K562 (cell line): ENCODE measurements at regions of chr11 and their contacts with region 1.

Region 1: DNA sequence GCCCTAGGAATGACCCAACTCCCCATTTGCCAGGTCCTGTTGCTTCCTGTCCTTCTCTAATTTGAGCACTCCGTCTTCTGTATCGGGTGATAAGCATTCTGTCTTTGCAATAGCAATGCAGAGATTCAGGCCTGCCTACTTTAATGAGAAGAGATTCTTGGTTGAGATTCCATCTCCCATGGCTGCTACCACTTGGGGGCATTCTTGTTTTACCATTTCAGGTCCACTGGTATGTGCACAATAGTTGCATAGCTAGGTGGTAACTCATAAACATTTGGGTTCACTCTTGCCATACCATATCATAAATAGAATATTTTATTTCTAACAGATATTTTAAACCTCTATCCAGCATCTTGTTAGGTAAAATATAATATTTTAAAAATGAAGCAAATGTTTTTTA is 34.4 kb upstream of the CALCB start:
- DNase-seq: no peak
- ATAC-seq: no peak
- H3K4me3 ChIP-seq: no peak overlapping the region
- H3K27ac ChIP-seq: no peak overlapping the region
- H3K4me1 ChIP-seq: peaks cover 0 to 7% of the 10 kb centered on the region in 2 experiments; a peak in 2 of 5 replicates
- H3K27me3 ChIP-seq: no peaks in the 10 kb centered on the region; a peak in 2 of 5 replicates
- CTCF ChIP-seq: peak in 1 of 3 experiments; percentile 36; a peak in 2 of 6 replicates
- EP300 ChIP-seq: no peak
- POLR2A ChIP-seq: no peak
- RAD21 ChIP-seq: peak in 1 of 2 experiments; percentile 31; a peak in 2 of 4 replicates

Region 2: GRCh38 chr11:14320020-14320419 is 718.9 kb before region 1 on chr11:
- CTCF ChIA-PET with region 1: no interaction called
- POLR2A ChIA-PET with region 1: no interaction called
- in situ Hi-C with region 1: no loop called
- intact Hi-C with region 1: no loop called
- DNase-seq: no peak
- ATAC-seq: no peak
- H3K4me3 ChIP-seq: no peak overlapping the region
- H3K27ac ChIP-seq: no peak overlapping the region
- H3K4me1 ChIP-seq: no peaks in the 10 kb centered on the region
- H3K27me3 ChIP-seq: no peaks in the 10 kb centered on the region
- CTCF ChIP-seq: no peak
- EP300 ChIP-seq: no peak
- POLR2A ChIP-seq: no peak
- RAD21 ChIP-seq: no peak

Region 3: GRCh38 chr11:14698771-14699170 is 340.2 kb before region 1 on chr11:
- CTCF ChIA-PET with region 1: no interaction called
- POLR2A ChIA-PET with region 1: no interaction called
- in situ Hi-C with region 1: no loop called
- intact Hi-C with region 1: no loop called
- DNase-seq: no peak
- ATAC-seq: no peak
- H3K4me3 ChIP-seq: no peak overlapping the region
- H3K27ac ChIP-seq: no peak overlapping the region; the same call in 2 of the 3 replicates
- H3K4me1 ChIP-seq: no peaks in the 10 kb centered on the region
- H3K27me3 ChIP-seq: no peaks in the 10 kb centered on the region
- CTCF ChIP-seq: no peak
- EP300 ChIP-seq: no peak
- POLR2A ChIP-seq: no peak
- RAD21 ChIP-seq: no peak

Region 4: GRCh38 chr11:15074206-15075161 is 35.5 kb after region 1 on chr11:
- CTCF ChIA-PET with region 1: no interaction called
- POLR2A ChIA-PET with region 1: no interaction called
- in situ Hi-C with region 1: no loop called
- intact Hi-C with region 1: loop called (anchors 1 kb)
- DNase-seq: peak; percentile 51 to 77 (median 52)
- ATAC-seq: peak; percentile 99
- H3K4me3 ChIP-seq: no peak overlapping the region
- H3K27ac ChIP-seq: no peak overlapping the region
- H3K4me1 ChIP-seq: peaks cover 0 to 11% of the 10 kb centered on the region in 2 experiments; a peak in 2 of 5 replicates
- H3K27me3 ChIP-seq: peaks cover 3 to 31% of the 10 kb centered on the region in 2 experiments; a peak in 4 of 5 replicates
- CTCF ChIP-seq: peak; percentile 76 to 79 (median 78)
- EP300 ChIP-seq: no peak
- POLR2A ChIP-seq: no peak
- RAD21 ChIP-seq: peak; percentile 75 to 81

Region 5: GRCh38 chr11:15123849-15124248 is 84.9 kb after region 1 on chr11:
- CTCF ChIA-PET with region 1: no interaction called
- POLR2A ChIA-PET with region 1: no interaction called
- in situ Hi-C with region 1: no loop called
- intact Hi-C with region 1: no loop called
- DNase-seq: no peak
- ATAC-seq: no peak
- H3K4me3 ChIP-seq: no peak overlapping the region
- H3K27ac ChIP-seq: no peak overlapping the region
- H3K4me1 ChIP-seq: no peaks in the 10 kb centered on the region
- H3K27me3 ChIP-seq: peaks cover 0 to 4% of the 10 kb centered on the region in 2 experiments; a peak in 1 of 5 replicates
- CTCF ChIP-seq: no peak
- EP300 ChIP-seq: no peak
- POLR2A ChIP-seq: no peak
- RAD21 ChIP-seq: no peak